Cardiac septum (tissue), 1 donor: ENCODE measurements at regions of chr16 and their contacts with region 1.

Region 1: DNA sequence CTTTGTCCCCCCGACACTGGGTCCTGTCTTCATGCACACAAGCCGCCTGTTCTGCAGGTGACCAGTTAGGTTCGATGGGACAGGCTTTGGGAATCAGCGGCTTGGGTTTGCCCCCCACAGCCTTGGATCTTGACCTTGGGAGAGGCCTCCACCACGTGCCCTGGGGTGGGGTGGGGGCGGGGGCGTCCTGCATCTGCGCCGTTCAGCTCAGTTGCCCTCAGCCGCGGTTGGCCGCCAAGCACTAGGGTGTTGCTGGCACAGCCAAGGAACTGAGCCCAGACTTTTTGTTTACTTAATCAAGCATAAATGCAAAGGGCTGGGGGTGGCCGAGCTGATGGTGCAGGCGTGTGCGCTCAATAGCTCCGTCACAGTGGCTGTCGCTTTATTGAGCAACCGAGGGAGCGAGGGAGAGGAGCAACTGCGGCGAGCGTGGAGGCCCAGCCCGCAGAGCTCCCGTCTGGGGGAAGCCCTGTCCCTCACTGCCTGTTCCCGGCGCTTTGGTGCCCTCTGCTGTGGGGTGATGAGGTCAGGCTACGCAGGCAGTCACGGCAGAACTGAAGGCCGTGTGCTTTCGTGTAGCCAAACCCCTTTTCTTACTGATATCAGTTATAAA is 33.9 kb downstream of the JPH3 start:
- DNase-seq: no peak

Region 2: DNA sequence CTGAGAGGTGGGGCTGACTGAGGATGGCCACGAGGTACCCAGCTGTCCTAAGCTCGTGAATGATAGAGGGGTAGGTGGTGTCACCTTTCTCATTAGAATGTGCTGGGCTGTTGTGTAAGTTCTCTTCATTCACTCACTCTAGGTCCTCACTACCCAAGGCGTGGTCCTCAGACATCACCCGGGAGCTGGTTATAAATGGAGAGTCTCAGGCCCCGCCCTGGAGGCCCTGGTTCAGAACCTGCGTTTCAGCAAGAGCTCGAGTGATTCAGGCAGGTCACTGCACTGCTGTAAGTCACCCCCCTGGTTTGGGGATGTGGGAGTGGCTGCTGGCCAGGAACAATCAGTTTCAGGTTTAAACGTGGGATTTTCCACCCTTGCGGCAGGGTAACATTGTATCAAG is 918.1 kb before region 1 on chr16:
- intact Hi-C with region 1: no loop called
- DNase-seq: no peak

Region 3: DNA sequence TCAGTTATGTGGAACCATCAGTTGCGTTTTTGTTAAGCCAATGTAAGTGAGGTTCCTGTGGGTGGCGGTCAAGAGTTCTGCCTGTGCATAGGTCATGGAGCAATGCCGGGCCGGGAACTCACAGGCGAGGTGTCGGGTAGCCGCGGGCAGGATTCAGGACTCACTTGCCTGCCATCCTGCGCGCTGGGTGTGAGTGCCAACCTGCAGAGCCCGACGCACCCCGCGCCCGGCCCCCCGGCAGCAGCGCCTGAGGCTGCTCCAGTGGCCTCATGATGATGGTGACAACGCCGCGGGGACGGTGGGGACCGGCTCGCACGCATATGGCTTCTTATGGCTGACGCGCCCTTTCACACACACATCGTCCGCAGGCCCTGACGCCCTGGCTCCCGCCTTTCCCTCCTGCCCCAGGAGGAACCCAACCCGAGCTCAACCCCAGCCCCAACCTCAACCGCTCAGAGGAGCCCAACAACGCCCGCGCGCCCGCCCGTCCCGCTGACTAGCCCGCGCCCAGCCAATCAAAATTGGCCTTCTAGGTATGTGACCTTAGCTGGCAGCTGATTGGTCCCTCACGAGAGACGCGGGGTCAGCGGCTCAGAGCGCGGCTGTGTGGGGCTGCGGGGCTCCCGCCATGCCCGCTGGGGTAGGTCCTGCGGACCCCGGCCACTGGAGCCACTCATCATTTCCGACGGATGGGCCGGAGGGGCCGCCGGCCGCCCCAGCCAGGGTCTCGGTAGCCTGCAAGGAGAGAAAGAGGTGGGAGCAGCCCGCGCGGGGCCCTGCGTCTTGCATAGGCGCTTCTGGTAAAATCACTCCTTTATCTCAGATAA is 319.0 kb before region 1 on chr16 and contains the start of gene C16orf95:
- intact Hi-C with region 1: loop called (anchors 10 kb)
- DNase-seq: peak; percentile 98
- total RNA-seq, gene C16orf95: 3.2 TPM

Region 4: DNA sequence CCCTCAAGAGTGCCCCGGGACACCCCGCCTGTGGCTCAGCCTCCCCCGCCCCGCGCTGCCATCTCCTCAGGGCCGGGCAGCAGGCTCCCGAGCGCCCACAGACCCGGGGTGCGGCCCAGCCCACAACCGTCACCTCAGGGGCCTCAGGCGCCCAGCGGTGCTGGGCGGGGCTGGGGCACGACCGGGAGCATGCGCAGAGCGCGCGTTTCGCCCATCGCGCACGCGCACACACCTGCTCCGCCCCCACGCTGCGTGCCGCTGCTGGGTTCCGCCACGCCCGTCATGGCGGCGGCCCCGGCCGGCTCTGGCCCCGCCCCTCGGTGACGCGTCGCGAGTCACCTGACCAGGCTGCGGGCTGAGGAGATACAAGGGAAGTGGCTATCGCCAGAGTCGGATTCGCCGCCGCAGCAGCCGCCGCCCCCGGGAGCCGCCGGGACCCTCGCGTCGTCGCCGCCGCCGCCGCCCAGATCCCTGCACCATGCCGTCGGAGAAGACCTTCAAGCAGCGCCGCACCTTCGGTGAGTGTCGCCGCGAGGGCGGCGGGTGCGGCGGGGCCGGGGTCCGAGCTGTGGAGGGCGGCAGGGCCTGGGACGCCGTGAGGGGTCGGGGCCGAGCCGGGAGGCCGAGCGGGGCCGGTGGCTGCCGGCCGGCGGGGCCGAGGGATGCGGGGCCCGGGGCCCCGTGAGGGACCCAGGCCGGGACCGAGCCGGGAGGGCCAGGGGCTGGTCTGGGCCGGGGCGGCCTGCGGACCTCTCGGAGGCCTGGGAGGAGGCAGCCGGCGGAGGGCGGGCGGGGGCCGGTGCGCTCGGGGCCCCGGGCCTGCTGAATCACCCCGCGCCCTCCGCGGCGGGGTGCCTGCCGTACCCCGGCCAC is 244.0 kb before region 1 on chr16 and contains the start of gene MAP1LC3B:
- intact Hi-C with region 1: loop called (anchors 5 kb)
- DNase-seq: peak; percentile 99
- total RNA-seq, gene MAP1LC3B: 113 TPM

Region 5: DNA sequence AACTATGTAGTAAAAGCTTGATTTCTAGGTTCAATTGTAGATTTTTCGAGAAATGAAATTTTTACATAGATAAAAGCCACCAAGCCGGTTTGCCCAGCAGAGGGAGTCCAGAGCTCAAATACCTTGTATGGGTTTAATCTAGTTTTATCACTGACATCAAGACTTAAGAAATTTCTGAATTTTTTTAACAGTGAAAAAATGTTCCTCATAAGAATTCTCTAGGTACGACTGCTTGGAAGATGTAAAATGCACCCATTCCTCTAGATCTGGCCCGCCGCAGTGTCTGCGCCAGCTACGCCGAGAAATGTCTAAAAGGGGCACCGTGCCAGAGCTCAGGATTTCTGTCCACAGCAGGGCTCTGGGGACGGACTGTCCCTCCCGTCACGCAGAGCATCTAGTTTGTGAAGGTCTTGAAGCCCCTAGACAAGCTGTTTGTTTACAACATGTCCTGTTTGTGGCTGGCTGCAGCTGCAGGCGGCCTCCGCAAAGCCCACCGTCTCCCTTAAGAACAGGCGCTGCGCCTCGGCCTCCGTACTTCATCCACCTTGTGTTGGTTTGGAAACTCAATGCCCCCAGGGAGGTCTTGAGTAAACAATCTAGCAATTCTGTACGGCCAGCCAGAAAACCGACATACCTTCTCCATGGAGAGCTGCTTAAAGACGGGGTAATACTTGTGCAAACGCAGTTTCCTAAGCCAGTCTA is 219.2 kb before region 1 on chr16:
- intact Hi-C with region 1: loop called (anchors 5 kb)
- DNase-seq: no peak

Region 6: DNA sequence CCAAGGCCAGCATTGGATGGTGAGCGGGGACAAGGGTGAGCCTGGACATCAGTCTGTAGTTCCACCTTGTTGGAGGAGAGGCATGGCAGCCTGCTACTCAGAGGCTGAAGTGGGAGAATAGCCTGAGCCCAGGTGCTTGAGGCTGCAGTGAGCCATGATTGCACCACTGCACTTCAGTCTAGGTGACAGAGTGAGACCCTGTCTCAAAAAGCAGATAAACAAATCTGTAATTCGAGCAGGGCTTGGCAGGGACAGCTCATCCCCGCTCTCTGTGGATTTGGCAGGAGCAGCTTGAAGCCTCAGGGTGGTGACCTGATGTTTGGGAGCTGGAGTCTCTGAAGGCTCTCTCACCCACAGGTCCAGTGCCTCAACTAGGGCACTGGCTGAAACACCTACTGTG is 104.8 kb before region 1 on chr16:
- intact Hi-C with region 1: no loop called
- DNase-seq: no peak

Region 7: GRCh38 chr16:87586201-87586782 is 49.9 kb before region 1 on chr16:
- intact Hi-C with region 1: loop called (anchors 2 kb)
- DNase-seq: no peak